A549 (cell line): ENCODE measurements at regions of chr2 and their contacts with region 1.

Region 1: DNA sequence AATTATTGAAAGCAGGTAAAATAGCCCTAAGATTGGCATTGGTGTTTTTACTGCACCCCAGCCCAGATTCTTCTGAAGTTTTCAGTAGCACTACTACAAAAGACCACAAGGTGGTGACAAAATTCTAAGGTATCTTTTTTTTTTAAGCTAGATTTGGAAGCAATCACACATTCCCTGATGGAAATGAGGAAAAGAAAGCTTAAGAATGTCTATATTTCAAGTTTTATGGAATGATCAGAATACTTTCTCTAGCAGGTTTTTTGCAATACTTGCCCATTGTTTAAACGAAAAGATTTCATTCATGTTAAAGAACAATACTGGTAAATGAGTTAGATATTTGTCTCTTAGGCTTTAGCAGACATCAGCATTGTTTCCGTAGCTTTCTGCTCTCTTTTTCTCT is 32.1 kb upstream of the ZNF638 start:
- DNase-seq: peak; percentile 39 to 41
- ATAC-seq: peak; percentile 71 to 74; a peak in 5 of 6 replicates
- H3K4me3 ChIP-seq: no peak overlapping the region
- H3K27ac ChIP-seq: no peak overlapping the region
- H3K4me1 ChIP-seq: no peaks in the 10 kb centered on the region
- CTCF ChIP-seq: peak; percentile 90
- EP300 ChIP-seq: no peak
- POLR2A ChIP-seq: no peak
- RAD21 ChIP-seq: peak; percentile 80 to 83

Region 2: DNA sequence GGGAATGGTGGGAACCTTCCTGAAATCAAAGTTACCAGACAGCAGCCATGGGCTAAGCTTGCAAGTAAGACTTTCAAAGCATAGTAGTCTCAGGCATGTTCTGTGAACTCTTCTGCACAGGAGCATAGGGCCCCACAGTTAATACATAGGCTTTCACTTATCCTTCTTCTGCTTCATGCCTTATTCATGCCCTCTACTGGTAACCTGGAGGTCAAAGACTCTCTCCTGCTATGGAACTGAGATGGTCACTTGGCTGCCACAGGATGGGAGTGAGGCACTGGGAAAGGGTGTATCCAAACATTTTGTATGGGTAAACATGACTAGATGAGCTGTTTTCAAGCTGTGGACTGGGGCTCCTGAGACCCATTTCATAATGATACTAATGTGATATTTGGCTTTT is 17.0 kb before region 1 on chr2:
- CTCF ChIA-PET with region 1: interaction called, 71 read pairs
- POLR2A ChIA-PET with region 1: no interaction called
- DNase-seq: peak in 1 of 2 experiments; percentile 41
- ATAC-seq: peak; percentile 79 to 89
- H3K4me3 ChIP-seq: no peak overlapping the region
- H3K27ac ChIP-seq: no peak overlapping the region
- H3K4me1 ChIP-seq: peaks cover 5% of the 10 kb centered on the region; the same call in 1 of the 3 replicates
- CTCF ChIP-seq: peak; percentile 36; the same call in 2 of the 3 replicates
- EP300 ChIP-seq: no peak
- POLR2A ChIP-seq: no peak
- RAD21 ChIP-seq: peak; percentile 37 to 54; a peak in 3 of 5 replicates

Region 3: GRCh38 chr2:71313016-71313766 is 13.7 kb after region 1 on chr2:
- CTCF ChIA-PET with region 1: interaction called, 37 read pairs
- POLR2A ChIA-PET with region 1: no interaction called
- DNase-seq: no peak
- ATAC-seq: no peak
- H3K4me3 ChIP-seq: no peak overlapping the region
- H3K27ac ChIP-seq: no peak overlapping the region
- H3K4me1 ChIP-seq: no peaks in the 10 kb centered on the region
- CTCF ChIP-seq: no peak
- EP300 ChIP-seq: no peak
- POLR2A ChIP-seq: no peak
- RAD21 ChIP-seq: no peak

Region 4: DNA sequence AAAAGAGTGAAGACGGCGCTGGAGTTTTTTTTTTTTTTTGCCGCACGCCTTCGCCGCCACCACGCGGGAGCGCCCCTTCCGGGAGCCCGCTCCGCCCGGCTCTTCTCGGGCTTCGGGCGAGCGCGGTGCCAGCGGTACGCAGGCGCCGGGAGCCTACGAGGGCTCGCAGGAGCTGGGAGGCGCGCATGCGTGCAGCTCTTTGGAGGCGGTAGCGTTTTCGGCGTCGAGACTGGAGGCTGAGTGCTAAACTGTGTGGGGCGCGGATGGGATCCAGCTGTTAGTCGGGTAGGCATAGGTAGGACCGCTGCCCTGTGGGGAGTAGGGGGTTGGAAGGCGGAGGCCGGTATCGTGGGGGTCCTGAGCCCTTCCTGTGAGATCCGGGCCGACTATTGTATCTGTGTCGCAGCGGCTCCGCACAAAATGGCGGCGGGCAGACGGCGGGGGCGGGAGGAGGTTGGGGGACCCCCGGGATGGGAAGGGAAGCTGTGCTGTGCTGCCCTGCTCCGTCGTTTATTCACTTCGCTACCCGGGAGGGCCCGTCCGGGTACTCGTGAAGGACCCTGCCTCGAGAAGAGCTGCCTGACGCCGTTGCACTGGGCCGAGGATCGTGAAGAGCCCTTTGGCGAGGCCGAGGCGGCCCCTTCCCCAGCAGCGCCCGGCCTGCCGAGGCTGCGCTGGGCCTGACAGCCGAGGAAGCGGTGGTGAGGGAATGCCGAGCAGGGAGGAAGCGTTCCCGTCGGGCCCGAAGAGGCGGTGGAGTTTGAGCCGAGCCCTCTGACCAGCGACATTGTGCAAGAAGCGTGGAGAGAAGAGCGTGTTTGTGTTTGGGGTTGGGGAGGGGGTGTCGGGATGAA is 32.3 kb after region 1 on chr2 and contains the start of gene ZNF638:
- CTCF ChIA-PET with region 1: interaction called, 41 read pairs
- POLR2A ChIA-PET with region 1: interaction called, 21 read pairs
- DNase-seq: peak; percentile 92 to 94
- ATAC-seq: peak; percentile 98 to 99
- H3K4me3 ChIP-seq: peak within 1 kb of the TSS; percentile 89
- H3K27ac ChIP-seq: peak within 1 kb of the TSS; percentile 88 to 96
- H3K4me1 ChIP-seq: peaks cover 29% of the 10 kb centered on the region
- CTCF ChIP-seq: peak; percentile 95
- EP300 ChIP-seq: no peak
- POLR2A ChIP-seq: peak; percentile 90
- RAD21 ChIP-seq: peak in 1 of 2 experiments; percentile 63; a peak in 3 of 5 replicates
- polyA plus RNA-seq, gene ZNF638: 148 and 160 TPM in 2 replicates

Region 5: DNA sequence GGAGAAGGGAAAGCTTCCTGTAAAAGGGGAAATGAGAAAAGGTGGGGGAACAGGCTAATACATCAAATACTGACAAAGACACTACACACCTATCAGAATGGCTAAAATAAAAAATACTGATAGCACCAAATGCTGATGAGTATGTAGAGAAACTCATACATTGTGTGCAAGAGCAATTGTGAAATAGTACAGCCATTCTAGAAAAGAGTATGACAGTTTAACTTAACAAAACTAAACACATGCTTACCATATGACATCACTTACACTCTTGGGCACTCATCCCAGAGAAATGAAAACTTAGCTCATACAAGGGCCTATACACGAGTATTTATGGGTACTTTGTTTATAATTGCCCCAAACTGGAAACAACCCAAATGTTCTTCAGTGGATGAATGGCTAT is 85.5 kb after region 1 on chr2:
- CTCF ChIA-PET with region 1: interaction called, 11 read pairs
- POLR2A ChIA-PET with region 1: no interaction called
- DNase-seq: no peak
- ATAC-seq: peak; percentile 42 to 43; a peak in 3 of 6 replicates
- H3K4me3 ChIP-seq: no peak overlapping the region
- H3K27ac ChIP-seq: no peak overlapping the region
- H3K4me1 ChIP-seq: peaks cover 15% of the 10 kb centered on the region
- CTCF ChIP-seq: no peak
- EP300 ChIP-seq: no peak
- POLR2A ChIP-seq: no peak
- RAD21 ChIP-seq: no peak